ENCODE measurements at regions of chr2 and their contacts with region 1.

Region 1: GRCh38 chr2:98909317-98910211 is 26.5 kb downstream of the CRACDL start:
- DNase-seq: peak; percentile 54
- H3K4me3 ChIP-seq: no peak overlapping the region
- H3K27ac ChIP-seq: peak overlapping the region; percentile 48
- H3K4me1 ChIP-seq: peaks cover 65% of the 10 kb centered on the region
- H3K27me3 ChIP-seq: no peaks in the 10 kb centered on the region
- CTCF ChIP-seq: no peak

Region 2: DNA sequence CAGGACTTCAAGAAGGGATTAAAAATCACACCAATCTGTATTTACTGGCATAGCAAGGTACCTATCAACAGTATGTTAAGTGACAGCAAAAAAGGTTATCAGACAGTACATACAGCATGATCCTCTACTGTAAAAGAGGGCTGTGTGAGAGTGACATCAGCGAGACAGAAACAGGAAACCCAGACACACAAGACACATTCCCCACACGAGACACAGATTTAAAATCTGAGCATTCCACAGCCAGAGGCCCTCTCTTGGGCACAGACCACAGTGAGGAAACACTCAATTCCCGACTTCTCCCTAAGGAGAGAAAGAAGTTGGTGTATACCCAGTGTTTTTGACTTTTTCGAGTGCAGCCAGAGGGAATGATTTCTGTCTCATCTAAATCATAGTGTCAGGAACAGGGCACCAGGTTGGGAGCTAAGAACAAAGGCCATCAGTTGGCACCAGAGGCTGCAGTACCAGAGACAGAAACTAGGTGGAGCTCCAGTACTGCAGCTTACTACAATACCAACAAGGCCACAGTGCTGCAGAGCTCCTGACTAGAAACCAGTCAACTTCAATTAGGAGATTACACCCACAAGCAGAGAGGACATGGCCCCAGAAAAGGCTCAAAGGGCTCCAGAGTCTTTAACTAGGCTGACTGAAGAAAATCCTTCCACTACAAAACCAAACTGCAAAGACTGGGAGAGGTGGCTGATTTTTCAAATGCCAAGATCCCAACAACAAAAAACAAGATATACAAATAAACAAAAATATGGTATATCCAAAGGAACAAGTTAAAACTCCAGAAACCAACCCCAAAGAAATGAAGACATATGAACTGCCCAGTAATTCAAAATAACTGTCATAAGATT is 260.2 kb before region 1 on chr2:
- CTCF ChIA-PET with region 1: no interaction called
- dilution Hi-C with region 1: no loop called
- in situ Hi-C with region 1: no loop called
- intact Hi-C with region 1: loop called (anchors 5 kb)
- DNase-seq: peak; percentile 65
- H3K4me3 ChIP-seq: no peak overlapping the region
- H3K27ac ChIP-seq: no peak overlapping the region
- H3K4me1 ChIP-seq: peaks cover 7% of the 10 kb centered on the region
- H3K27me3 ChIP-seq: no peaks in the 10 kb centered on the region
- CTCF ChIP-seq: peak; percentile 99

Region 3: GRCh38 chr2:98664327-98664726 is 245.2 kb before region 1 on chr2:
- CTCF ChIA-PET with region 1: no interaction called
- dilution Hi-C with region 1: no loop called
- in situ Hi-C with region 1: no loop called
- intact Hi-C with region 1: loop called (anchors 5 kb)
- DNase-seq: peak; percentile 88
- H3K4me3 ChIP-seq: no peak overlapping the region
- H3K27ac ChIP-seq: peak overlapping the region; percentile 79
- H3K4me1 ChIP-seq: peaks cover 12% of the 10 kb centered on the region
- H3K27me3 ChIP-seq: no peaks in the 10 kb centered on the region
- CTCF ChIP-seq: no peak

Region 4: GRCh38 chr2:98731041-98731893 is 178.3 kb before region 1 on chr2 and contains the start of gene MGAT4A:
- CTCF ChIA-PET with region 1: no interaction called
- dilution Hi-C with region 1: no loop called
- in situ Hi-C with region 1: no loop called
- intact Hi-C with region 1: loop called (anchors 10 kb)
- DNase-seq: peak; percentile 43
- H3K4me3 ChIP-seq: peak within 1 kb of the TSS; percentile 65 to 72 (median 68)
- H3K27ac ChIP-seq: no peak within 1 kb of the TSS
- H3K4me1 ChIP-seq: peaks cover 17% of the 10 kb centered on the region
- H3K27me3 ChIP-seq: no peaks in the 10 kb centered on the region
- CTCF ChIP-seq: no peak
- total RNA-seq, gene MGAT4A: 2.0 to 4.3 TPM

Region 5: GRCh38 chr2:98869940-98870263 is 39.7 kb before region 1 on chr2:
- CTCF ChIA-PET with region 1: no interaction called
- dilution Hi-C with region 1: no loop called
- in situ Hi-C with region 1: no loop called
- intact Hi-C with region 1: loop called (anchors 1 kb)
- DNase-seq: no peak
- H3K4me3 ChIP-seq: no peak overlapping the region
- H3K27ac ChIP-seq: peak overlapping the region; percentile 72
- H3K4me1 ChIP-seq: peaks cover 59% of the 10 kb centered on the region
- H3K27me3 ChIP-seq: no peaks in the 10 kb centered on the region
- CTCF ChIP-seq: peak in 1 of 2 donors; percentile 0

Region 6: GRCh38 chr2:98936353-98937351 is 27.1 kb after region 1 on chr2:
- CTCF ChIA-PET with region 1: no interaction called
- dilution Hi-C with region 1: no loop called
- in situ Hi-C with region 1: no loop called
- intact Hi-C with region 1: loop called (anchors 1 kb)
- DNase-seq: peak; percentile 53
- H3K4me3 ChIP-seq: peak overlapping the region; percentile 66 to 78 (median 71)
- H3K27ac ChIP-seq: peak overlapping the region; percentile 59
- H3K4me1 ChIP-seq: peaks cover 18% of the 10 kb centered on the region
- H3K27me3 ChIP-seq: no peaks in the 10 kb centered on the region
- CTCF ChIP-seq: peak; percentile 10 to 42

Region 7: GRCh38 chr2:98952966-98953365 is 43.4 kb after region 1 on chr2:
- CTCF ChIA-PET with region 1: no interaction called
- dilution Hi-C with region 1: no loop called
- in situ Hi-C with region 1: no loop called
- intact Hi-C with region 1: loop called (anchors 2 kb)
- DNase-seq: peak; percentile 50
- H3K4me3 ChIP-seq: no peak overlapping the region
- H3K27ac ChIP-seq: no peak overlapping the region
- H3K4me1 ChIP-seq: peaks cover 10% of the 10 kb centered on the region
- H3K27me3 ChIP-seq: no peaks in the 10 kb centered on the region
- CTCF ChIP-seq: no peak

Measured in mammary epithelial cell (primary cell).